CD4-positive, alpha-beta T cell (primary cell): ENCODE measurements at regions of chr11 and their contacts with region 1.

Region 1: GRCh38 chr11:114192841-114193389 is 103.3 kb upstream of the NNMT start:
- DNase-seq: peak in 2 of 14 experiments; percentile 26 to 27
- ATAC-seq: no peak
- H3K4me3 ChIP-seq: no peak overlapping the region
- H3K4me3 Mint-ChIP-seq: no peak overlapping the region
- H3K27ac ChIP-seq: no peak overlapping the region
- H3K27ac Mint-ChIP-seq: no peak overlapping the region
- H3K4me1 ChIP-seq: peaks cover 19% of the 10 kb centered on the region
- H3K4me1 Mint-ChIP-seq: peaks cover 47% of the 10 kb centered on the region
- H3K27me3 ChIP-seq: no peaks in the 10 kb centered on the region
- H3K27me3 Mint-ChIP-seq: no peaks in the 10 kb centered on the region
- CTCF ChIP-seq: no peak

Region 2: GRCh38 chr11:114166897-114167323 is 26.0 kb before region 1 on chr11:
- CTCF ChIA-PET with region 1: interaction called, 3 read pairs
- POLR2A ChIA-PET with region 1: interaction called, 19 read pairs
- intact Hi-C with region 1: loop called in 1 of 2 experiments (anchors 5 kb)
- DNase-seq: peak in 4 of 14 experiments; percentile 53 to 77 (median 64)
- ATAC-seq: peak; percentile 62
- H3K4me3 ChIP-seq: no peak overlapping the region
- H3K4me3 Mint-ChIP-seq: peak overlapping the region; percentile 63
- H3K27ac ChIP-seq: no peak overlapping the region
- H3K27ac Mint-ChIP-seq: peak overlapping the region; percentile 63
- H3K4me1 ChIP-seq: peaks cover 89% of the 10 kb centered on the region
- H3K4me1 Mint-ChIP-seq: peaks cover 98% of the 10 kb centered on the region
- H3K27me3 ChIP-seq: no peaks in the 10 kb centered on the region
- H3K27me3 Mint-ChIP-seq: no peaks in the 10 kb centered on the region
- CTCF ChIP-seq: no peak